Activated CD4-positive, alpha-beta T cell treated with anti-CD3 and anti-CD28 coated beads, Interleukin-2, amount 10 ng/mL, durations not matched to agents 24 days and 14 days (primary cell): ENCODE measurements at regions of chr2 and their contacts with region 1.

Region 1: DNA sequence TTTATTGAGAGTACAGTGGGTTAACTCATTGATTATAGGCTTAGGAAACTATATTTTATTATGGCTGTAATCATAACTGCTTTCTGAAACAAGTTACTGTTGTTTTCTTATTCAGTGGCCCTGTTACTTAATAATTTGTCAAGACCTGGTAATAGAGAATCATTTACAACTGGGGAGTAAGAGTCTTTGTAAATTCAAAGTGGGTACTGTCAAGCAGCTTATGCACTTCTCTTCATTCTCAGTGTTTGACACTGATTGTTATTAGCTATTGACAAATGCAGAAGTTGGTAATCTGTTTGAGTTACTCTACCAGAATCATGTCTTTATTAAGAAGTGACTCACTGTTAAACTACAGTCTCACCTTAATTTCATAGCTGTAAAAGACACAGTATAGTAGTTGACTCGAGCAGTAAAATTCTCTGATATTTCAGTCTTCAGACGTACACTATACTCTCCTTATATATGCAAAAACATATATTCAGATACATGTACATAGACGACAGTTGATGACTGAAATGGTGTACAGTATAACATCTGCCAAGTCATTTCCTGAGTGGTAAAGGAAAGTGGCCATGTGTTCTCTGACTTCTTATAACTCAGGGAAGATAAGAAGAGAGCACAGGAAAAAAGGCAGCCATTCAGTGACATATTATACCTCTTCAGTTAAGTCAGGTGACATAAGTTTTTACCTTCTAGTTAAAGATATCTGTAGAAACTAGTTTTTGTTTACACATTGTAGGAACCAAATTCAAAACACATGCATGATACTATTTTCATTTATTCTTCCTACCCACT is 36.0 kb upstream of the TTC27 start:
- DNase-seq: peak; percentile 76
- H3K4me3 Mint-ChIP-seq: peak overlapping the region; percentile 68
- H3K27ac Mint-ChIP-seq: peak overlapping the region; percentile 86
- H3K4me1 Mint-ChIP-seq: peaks cover 33% of the 10 kb centered on the region
- H3K27me3 Mint-ChIP-seq: no peaks in the 10 kb centered on the region

Region 2: DNA sequence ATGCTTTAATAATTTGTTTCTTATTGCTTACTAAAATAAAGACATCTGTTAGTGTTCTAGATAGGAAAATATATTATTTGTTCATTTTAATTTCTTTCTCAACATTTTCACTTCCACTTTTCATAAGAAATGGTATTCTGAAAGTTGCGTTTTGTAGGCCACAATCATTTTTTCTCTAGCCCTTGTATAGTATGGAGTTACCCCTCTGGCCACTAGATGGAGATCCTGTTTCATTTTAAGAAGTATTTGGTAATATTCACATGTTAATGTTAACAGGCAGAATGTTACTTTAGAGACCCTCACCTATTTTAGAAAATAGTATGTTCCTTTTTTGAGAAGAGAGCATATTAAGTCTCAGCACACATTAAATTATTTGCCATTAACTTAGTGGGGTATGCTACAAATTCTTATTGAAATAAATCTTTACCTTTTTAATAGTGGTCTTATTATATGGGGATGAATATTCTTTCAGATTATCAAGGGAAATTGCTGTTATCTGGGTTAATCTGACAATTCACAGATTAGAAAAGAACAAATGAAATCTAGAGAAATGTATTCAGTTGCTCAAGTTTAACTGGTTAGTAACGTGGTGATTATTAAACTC is 37.9 kb before region 1 on chr2:
- intact Hi-C with region 1: no loop called
- DNase-seq: peak; percentile 66
- H3K4me3 Mint-ChIP-seq: no peak overlapping the region
- H3K27ac Mint-ChIP-seq: no peak overlapping the region
- H3K4me1 Mint-ChIP-seq: no peaks in the 10 kb centered on the region
- H3K27me3 Mint-ChIP-seq: no peaks in the 10 kb centered on the region

Region 3: GRCh38 chr2:32572737-32573136 is 19.1 kb before region 1 on chr2:
- intact Hi-C with region 1: loop called (anchors 2 kb)
- DNase-seq: peak; percentile 64
- H3K4me3 Mint-ChIP-seq: no peak overlapping the region
- H3K27ac Mint-ChIP-seq: peak overlapping the region; percentile 7
- H3K4me1 Mint-ChIP-seq: peaks cover 23% of the 10 kb centered on the region
- H3K27me3 Mint-ChIP-seq: no peaks in the 10 kb centered on the region

Region 4: DNA sequence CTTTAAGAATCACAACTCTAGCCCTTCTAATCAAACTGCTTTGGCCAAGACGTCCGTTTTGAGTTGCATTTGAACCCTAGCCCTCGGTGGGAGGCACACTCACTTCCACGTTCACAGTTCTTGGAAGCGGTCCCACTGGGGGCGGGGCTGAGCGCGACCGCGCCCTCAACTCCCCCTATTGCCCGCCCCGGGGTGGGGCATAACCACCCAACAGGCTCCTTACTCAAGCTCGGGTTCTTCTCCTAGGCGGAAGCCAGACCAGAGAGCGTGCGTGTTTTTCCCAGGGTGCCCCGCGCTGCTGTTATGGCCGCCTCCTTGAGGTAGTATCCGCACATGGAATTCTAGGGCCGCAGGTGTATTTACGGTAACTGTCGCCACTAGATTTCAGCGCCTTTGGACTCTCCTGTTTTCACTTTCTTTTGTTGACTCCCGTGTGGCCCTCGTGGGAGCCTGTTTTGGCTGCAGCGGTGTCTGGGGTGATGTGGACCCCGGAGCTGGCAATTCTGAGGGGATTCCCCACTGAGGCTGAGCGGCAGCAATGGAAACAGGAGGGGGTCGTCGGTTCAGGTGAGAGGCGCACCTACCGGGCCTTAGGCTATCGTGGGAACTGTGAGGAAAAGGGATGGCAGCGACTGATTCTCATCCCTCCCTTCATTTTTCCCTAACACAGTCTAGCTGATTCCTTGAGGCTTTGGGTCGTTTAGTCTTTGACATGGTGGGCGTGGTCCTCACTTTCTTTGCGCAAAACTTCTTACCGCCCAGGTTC is 36.1 kb after region 1 on chr2 and contains the start of gene TTC27:
- intact Hi-C with region 1: loop called (anchors 5 kb)
- DNase-seq: peak; percentile 99
- H3K4me3 Mint-ChIP-seq: peak within 1 kb of the TSS; percentile 86
- H3K27ac Mint-ChIP-seq: peak within 1 kb of the TSS; percentile 91
- H3K4me1 Mint-ChIP-seq: peaks cover 24% of the 10 kb centered on the region
- H3K27me3 Mint-ChIP-seq: no peaks in the 10 kb centered on the region
- total RNA-seq, gene TTC27: 40.8 and 46.8 TPM in 2 replicates

Region 5: DNA sequence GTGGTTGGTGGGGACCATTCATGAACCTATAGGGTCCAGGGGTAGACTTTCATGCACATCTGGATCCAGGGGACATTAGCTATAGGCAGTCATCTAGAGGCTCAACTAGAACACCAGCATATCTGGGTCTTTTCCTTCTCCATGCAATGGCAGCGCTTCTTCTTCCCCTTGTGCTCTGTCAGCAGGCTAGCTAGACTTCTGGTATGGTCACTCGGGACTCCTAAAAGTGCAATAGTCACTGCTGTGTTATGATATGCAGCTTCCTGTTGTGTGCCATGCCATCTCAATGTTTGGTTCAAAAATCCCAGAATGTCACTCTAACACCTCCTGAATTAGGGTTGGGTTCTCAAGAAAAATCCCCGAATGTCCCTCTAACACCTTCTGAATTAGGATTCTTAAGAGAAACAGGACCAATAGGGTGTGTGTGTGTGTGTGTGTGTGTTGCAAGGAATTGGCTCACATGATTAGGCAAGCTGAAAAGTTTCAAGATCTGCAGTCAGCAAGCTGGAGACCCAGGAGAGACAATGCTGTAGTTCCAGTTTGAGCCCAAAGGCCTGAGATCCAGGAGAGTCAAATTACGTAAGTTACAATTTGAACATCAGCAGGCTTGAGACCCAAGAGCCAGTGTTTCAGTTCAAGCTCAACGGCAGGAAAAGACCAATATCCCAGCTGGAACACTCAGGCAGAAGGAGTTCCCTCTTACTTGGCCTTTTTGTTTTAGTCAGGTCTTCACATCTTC is 257.8 kb after region 1 on chr2:
- intact Hi-C with region 1: no loop called
- DNase-seq: no peak
- H3K4me3 Mint-ChIP-seq: no peak overlapping the region
- H3K27ac Mint-ChIP-seq: no peak overlapping the region
- H3K4me1 Mint-ChIP-seq: no peaks in the 10 kb centered on the region
- H3K27me3 Mint-ChIP-seq: peaks cover 2% of the 10 kb centered on the region